ENCODE measurements at regions of chr4 and their contacts with region 1.

Region 1: GRCh38 chr4:55866973-55867574 is 13.6 kb downstream of the EXOC1 start:
- DNase-seq: no peak
- ATAC-seq: peak; percentile 88

Region 2: GRCh38 chr4:55444827-55445226 is 422.2 kb before region 1 on chr4:
- intact Hi-C with region 1: loop called (anchors 10 kb)
- DNase-seq: no peak
- ATAC-seq: no peak

Region 3: DNA sequence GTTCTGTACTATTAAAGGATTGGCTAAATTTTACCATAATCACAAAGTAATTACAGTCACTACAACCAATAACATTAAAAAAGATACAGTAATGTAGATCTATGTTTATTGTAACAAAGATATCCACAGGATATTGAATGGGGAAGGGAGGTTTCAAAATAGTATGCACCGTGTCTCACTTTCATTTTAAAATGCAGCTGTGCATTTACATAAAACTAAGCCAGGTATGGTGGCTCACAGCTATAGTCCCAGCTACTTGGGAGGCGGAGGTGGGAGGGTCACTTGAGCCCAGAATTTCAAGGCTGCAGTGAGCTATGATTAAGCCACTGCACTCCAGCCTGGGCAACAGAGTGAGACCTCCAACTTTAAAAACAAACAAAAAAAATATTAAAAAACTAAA is 608.8 kb after region 1 on chr4:
- intact Hi-C with region 1: loop called (anchors 5 kb)
- DNase-seq: no peak
- ATAC-seq: no peak

Measured in Right ventricle myocardium inferior (tissue), 1 donor.